Transverse colon (tissue), 4 donors: ENCODE measurements at regions of chr6 and their contacts with region 1.

Region 1: GRCh38 chr6:110643175-110643574 is 166.8 kb upstream of the SLC22A16 start:
- DNase-seq: no peak
- H3K4me3 ChIP-seq: no peak overlapping the region
- H3K27ac ChIP-seq: no peak overlapping the region
- H3K4me1 ChIP-seq: no peaks in the 10 kb centered on the region
- H3K27me3 ChIP-seq: no peaks in the 10 kb centered on the region
- CTCF ChIP-seq: no peak
- EP300 ChIP-seq: no peak
- POLR2A ChIP-seq: no peak

Region 2: DNA sequence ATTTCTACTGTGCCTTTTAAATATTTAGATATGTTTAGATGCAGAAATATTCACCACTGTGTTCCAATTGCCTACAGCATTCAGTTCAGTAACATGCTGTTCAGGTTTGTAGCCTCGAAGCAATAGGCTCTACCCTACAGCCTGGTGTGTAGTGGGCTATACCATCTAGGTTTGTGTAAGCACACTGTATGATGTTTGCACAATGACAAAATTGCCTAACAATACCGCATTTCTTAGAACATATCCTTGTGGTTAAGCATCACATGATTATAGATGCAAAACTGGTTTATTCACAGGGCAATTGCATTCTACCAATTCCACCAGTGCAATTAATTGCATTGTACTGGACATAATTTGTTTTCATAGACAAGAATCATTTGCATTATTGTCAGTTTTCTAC is 158.9 kb before region 1 on chr6:
- in situ Hi-C with region 1: no loop called
- intact Hi-C with region 1: loop called (anchors 5 kb)
- DNase-seq: no peak
- H3K4me3 ChIP-seq: no peak overlapping the region
- H3K27ac ChIP-seq: no peak overlapping the region
- H3K4me1 ChIP-seq: no peaks in the 10 kb centered on the region
- H3K27me3 ChIP-seq: no peaks in the 10 kb centered on the region
- CTCF ChIP-seq: no peak
- EP300 ChIP-seq: no peak
- POLR2A ChIP-seq: no peak

Region 3: DNA sequence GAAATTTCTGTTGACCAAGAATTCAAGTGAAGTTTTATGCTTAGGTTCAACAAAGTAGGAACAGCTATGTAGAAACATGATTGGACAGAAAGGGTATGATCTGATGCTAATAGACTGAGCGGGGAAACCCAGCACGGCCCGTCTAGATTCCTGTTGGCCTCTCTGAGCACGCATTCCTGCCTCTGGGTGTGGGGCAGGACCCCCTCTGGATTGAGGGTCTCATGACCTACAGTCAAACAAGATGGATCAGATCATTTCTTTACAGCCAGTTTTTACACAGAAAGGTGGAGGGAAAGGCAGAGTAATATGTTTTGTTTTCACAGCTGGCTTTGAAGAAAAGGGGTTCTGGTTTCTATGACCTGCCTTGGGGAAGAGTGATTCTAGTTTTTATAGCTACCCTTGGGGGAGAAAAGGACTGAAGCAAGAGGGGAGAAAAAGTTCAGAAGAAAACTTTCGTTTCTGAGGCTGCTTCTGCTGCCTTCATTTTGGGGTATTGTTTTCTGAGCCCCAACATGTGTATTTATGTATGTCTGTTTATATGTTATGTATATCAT is 67.2 kb before region 1 on chr6:
- in situ Hi-C with region 1: no loop called
- intact Hi-C with region 1: loop called (anchors 2 kb)
- DNase-seq: no peak
- H3K4me3 ChIP-seq: no peak overlapping the region
- H3K27ac ChIP-seq: no peak overlapping the region
- H3K4me1 ChIP-seq: no peaks in the 10 kb centered on the region
- H3K27me3 ChIP-seq: no peaks in the 10 kb centered on the region
- CTCF ChIP-seq: no peak
- EP300 ChIP-seq: no peak
- POLR2A ChIP-seq: no peak

Region 4: DNA sequence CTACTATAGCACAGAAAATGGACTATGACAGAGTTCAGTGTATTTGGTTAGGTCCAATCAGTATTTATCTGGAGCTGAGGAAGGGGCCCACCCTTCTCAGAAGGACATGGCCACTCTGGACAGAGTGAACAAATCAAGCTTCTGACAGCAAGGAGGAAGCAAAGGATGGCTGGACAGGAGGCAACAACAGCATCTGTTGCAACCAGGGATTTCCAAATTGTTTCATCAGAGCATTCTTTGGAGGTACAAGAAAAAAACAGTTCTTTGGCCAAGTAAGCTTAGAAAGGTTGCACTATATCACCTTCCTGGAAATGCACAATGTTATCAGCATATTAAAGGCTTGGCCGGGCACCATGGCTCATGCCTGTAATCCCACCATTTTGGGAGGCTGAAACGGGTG is 48.1 kb before region 1 on chr6:
- in situ Hi-C with region 1: no loop called
- intact Hi-C with region 1: no loop called
- DNase-seq: no peak
- H3K4me3 ChIP-seq: no peak overlapping the region
- H3K27ac ChIP-seq: no peak overlapping the region
- H3K4me1 ChIP-seq: no peaks in the 10 kb centered on the region
- H3K27me3 ChIP-seq: no peaks in the 10 kb centered on the region
- CTCF ChIP-seq: no peak
- EP300 ChIP-seq: no peak
- POLR2A ChIP-seq: no peak